Mammary epithelial cell (primary cell): ENCODE measurements at regions of chr13 and their contacts with region 1.

Region 1: DNA sequence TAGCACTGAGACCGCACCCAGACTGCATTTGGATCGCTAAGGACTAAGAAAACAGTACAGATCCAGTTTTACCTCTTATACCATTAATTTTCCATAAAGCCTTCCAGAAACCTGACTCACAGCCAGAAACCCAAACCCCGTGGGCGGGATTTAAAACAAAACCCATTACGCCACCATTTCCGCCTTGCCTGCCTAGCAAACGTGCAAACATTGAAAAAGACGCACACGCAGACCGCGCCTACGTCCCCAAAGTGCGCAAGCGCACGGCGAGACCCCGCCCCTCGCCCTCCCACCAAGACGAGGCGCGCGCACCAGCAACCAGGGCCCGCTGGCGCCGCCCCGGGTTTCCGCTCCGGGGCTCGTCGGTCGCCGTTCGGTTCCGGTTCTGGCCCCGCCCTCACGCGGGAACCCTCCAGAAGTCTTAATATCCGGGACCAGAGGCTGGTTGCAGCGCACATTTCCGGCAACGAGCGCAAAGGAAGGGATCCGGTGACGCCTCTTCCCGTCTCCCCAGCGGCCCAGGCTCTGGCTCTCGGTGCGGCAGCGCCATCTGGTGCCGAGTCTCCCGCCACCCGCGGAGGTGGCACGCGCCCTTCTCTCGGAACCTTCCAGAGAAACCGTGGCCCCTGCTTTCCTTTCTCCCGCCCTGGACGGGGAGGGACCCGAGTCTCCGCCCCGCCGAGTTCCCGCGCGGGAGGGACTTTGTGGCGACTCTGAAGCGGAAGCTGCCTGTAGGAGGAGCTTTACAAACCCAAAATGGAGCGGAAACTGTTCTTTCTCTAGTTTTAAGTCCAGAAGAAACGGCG is 256.9 kb upstream of the STARD13 start:
- DNase-seq: peak; percentile 98
- H3K4me3 ChIP-seq: peak overlapping the region; percentile 56 to 87 (median 66)
- H3K27ac ChIP-seq: peak overlapping the region; percentile 99
- H3K4me1 ChIP-seq: peaks cover 12% of the 10 kb centered on the region
- H3K27me3 ChIP-seq: no peaks in the 10 kb centered on the region
- CTCF ChIP-seq: peak; percentile 62 to 89

Region 2: GRCh38 chr13:32586080-32586900 is 956.2 kb before region 1 on chr13 and contains the start of gene PDS5B:
- CTCF ChIA-PET with region 1: no interaction called
- dilution Hi-C with region 1: no loop called
- in situ Hi-C with region 1: no loop called
- intact Hi-C with region 1: loop called (anchors 1 kb)
- DNase-seq: peak; percentile 93
- H3K4me3 ChIP-seq: peak within 1 kb of the TSS; percentile 77 to 97 (median 94)
- H3K27ac ChIP-seq: peak within 1 kb of the TSS; percentile 67
- H3K4me1 ChIP-seq: peaks cover 10% of the 10 kb centered on the region
- H3K27me3 ChIP-seq: no peaks in the 10 kb centered on the region
- CTCF ChIP-seq: peak; percentile 37 to 77
- total RNA-seq, gene PDS5B: 14.3 to 22.4 TPM

Region 3: DNA sequence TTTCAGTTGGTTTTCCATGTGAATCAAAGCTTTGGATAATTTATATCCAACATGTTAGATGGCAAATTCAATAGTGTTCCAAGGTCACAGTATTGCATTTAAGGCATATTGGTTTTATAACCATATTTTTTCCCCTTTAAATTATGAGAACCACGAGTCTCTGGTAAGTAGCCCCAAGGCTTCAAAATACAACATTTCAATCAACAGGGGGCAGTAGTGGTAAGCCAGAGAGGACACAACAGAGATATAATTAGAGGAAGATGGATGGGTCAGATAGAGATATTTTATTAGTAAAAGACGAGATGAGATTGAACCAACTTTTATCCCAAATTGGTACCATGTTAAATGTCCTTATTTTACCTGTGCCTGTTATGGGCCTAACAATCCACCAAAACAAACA is 473.1 kb before region 1 on chr13:
- CTCF ChIA-PET with region 1: interaction called, 4 read pairs
- dilution Hi-C with region 1: no loop called
- in situ Hi-C with region 1: no loop called
- intact Hi-C with region 1: loop called (anchors 1 kb)
- DNase-seq: no peak
- H3K4me3 ChIP-seq: no peak overlapping the region
- H3K27ac ChIP-seq: no peak overlapping the region
- H3K4me1 ChIP-seq: no peaks in the 10 kb centered on the region
- H3K27me3 ChIP-seq: no peaks in the 10 kb centered on the region
- CTCF ChIP-seq: peak in 1 of 2 donors; percentile 43

Region 4: DNA sequence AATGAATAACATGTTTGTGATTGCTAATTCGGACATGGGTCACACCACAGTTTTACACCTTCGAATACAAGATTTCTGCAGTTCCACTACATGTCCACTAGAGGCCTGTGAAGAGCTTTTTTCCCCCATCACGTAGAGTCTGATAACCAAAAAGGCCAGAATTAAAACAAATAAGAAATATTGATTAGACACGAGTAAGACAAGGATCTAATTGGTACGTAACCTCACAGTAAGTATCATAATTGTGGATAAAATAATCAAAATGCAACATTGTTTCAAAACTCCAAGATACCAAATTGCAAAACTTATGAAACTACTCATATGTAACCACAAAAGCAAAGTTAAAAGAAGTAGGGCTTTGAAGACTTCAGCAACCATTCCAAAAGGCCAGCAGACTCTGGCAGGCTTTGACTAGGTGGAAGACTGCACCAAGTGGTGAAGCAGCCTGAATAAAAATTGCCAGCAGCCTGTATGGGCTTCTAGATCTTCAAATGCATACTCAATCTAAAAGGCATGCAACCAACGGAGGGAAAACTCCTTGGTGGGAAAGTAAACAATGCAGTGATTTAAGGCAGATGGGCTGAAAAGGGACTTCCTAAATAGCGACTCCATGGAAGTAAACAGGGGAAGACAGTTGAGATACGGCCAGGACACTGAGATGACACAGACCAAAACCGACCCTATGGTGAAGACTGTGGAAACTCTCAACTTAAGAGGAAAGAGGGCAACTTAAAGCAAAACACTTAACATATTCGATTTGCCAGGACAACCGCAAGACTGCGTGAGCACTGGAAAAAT is 313.6 kb before region 1 on chr13:
- CTCF ChIA-PET with region 1: no interaction called
- dilution Hi-C with region 1: no loop called
- in situ Hi-C with region 1: loop called in 1 of 2 experiments (anchors 25 kb)
- intact Hi-C with region 1: loop called (anchors 1 kb)
- DNase-seq: no peak
- H3K4me3 ChIP-seq: no peak overlapping the region
- H3K27ac ChIP-seq: peak overlapping the region; percentile 3
- H3K4me1 ChIP-seq: peaks cover 47% of the 10 kb centered on the region
- H3K27me3 ChIP-seq: no peaks in the 10 kb centered on the region
- CTCF ChIP-seq: peak; percentile 98

Region 5: GRCh38 chr13:33285420-33286124 is 256.9 kb before region 1 on chr13 and contains the start of gene STARD13:
- CTCF ChIA-PET with region 1: interaction called, 4 read pairs
- dilution Hi-C with region 1: no loop called
- in situ Hi-C with region 1: no loop called
- intact Hi-C with region 1: loop called (anchors 1 kb)
- DNase-seq: peak; percentile 96
- H3K4me3 ChIP-seq: peak within 1 kb of the TSS; percentile 67 to 94 (median 71)
- H3K27ac ChIP-seq: peak within 1 kb of the TSS; percentile 99
- H3K4me1 ChIP-seq: peaks cover 29% of the 10 kb centered on the region
- H3K27me3 ChIP-seq: no peaks in the 10 kb centered on the region
- CTCF ChIP-seq: peak; percentile 20 to 36
- total RNA-seq, gene STARD13: 10.8 to 15.5 TPM

Region 6: DNA sequence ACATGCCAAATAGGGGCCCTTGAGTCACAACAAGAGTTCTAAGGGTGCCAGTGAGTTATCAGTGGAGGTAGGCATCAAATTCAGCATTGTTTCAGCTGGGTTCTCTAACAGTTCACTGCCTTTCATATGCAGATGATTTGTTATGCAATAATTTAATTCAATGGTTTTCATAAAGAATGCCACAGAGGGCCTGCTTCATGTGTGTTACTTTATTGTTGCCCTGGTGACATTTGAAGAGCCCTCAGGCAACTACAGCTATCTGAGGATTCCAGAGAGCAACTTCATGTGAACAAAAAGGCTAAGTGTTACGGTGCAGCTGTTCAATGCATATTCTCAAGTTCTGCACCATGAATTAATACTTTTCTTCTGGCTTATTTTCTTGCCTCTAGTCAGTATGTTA is 213.8 kb before region 1 on chr13:
- CTCF ChIA-PET with region 1: no interaction called
- dilution Hi-C with region 1: no loop called
- in situ Hi-C with region 1: no loop called
- intact Hi-C with region 1: no loop called
- DNase-seq: peak; percentile 16
- H3K4me3 ChIP-seq: no peak overlapping the region
- H3K27ac ChIP-seq: no peak overlapping the region
- H3K4me1 ChIP-seq: no peaks in the 10 kb centered on the region
- H3K27me3 ChIP-seq: no peaks in the 10 kb centered on the region
- CTCF ChIP-seq: no peak

Region 7: DNA sequence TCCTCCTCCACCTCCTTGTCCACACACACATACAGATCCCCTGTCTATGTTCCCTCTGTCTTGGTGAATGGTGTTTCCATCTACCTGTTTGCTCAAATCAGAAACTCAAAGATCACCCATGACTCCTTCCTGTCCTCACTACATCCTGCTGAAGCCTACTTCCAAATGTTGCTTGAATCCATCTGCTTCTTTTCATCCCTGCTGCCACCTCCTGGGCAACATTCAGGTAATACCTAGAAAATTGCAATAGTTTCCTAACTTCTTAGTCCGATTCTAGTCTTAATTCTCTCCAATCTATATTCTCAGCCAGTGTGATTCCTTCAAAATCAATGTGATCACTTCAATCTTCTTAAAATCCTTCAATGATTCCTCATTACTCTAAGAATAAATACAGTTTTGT is 101.5 kb before region 1 on chr13:
- CTCF ChIA-PET with region 1: no interaction called
- dilution Hi-C with region 1: no loop called
- in situ Hi-C with region 1: no loop called
- intact Hi-C with region 1: loop called (anchors 1 kb)
- DNase-seq: peak; percentile 36
- H3K4me3 ChIP-seq: no peak overlapping the region
- H3K27ac ChIP-seq: no peak overlapping the region
- H3K4me1 ChIP-seq: no peaks in the 10 kb centered on the region
- H3K27me3 ChIP-seq: no peaks in the 10 kb centered on the region
- CTCF ChIP-seq: peak; percentile 31 to 55

Region 8: DNA sequence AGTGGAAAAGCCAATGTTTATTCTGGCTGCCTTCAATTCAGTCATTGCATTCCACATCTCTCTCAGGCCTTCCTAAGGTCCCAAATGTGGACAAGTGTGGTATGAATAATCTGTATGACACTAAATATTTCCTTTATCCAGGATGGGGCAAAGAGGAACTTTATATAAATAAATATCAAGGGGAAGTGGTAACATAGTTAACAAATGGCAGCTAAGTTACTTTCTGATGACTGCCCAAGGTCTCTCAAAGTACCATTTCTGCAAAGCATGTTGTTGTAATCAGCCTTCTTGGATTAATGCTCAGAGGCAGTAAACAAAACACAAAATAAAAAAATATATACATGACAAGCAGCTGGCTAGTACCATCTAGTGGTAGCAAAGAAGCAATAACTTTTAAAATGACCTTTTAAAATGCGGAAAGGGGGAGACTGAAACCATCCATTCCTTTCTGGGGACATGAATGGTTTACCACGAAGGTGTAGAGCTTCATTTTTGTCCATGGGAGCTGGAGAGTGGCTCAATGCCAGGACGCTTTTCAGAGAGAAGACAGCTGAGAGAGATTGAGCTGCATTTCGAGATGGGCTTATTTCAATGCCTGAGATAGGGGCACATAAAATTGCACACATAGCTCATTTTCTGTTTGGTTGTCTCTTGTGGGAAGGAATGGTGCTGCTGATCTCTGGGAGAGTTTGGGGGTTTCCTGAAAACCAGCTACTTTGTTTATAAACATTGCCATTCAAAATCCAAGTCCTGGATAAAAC is 534.6 kb after region 1 on chr13:
- CTCF ChIA-PET with region 1: no interaction called
- dilution Hi-C with region 1: no loop called
- in situ Hi-C with region 1: no loop called
- intact Hi-C with region 1: loop called (anchors 2 kb)
- DNase-seq: peak; percentile 16
- H3K4me3 ChIP-seq: no peak overlapping the region
- H3K27ac ChIP-seq: peak overlapping the region; percentile 25
- H3K4me1 ChIP-seq: peaks cover 10% of the 10 kb centered on the region
- H3K27me3 ChIP-seq: no peaks in the 10 kb centered on the region
- CTCF ChIP-seq: peak; percentile 54 to 68